WTC11 (cell line): ENCODE measurements at regions of chr17 and their contacts with region 1.

Region 1: GRCh38 chr17:42019509-42020404 is at the start of gene NKIRAS2:
- DNase-seq: peak; percentile 97
- ATAC-seq: peak; percentile 72
- H3K4me3 Mint-ChIP-seq: peak within 1 kb of the TSS; percentile 95
- H3K27ac Mint-ChIP-seq: peak within 1 kb of the TSS; percentile 89
- H3K4me1 Mint-ChIP-seq: peaks cover 40% of the 10 kb centered on the region
- H3K27me3 Mint-ChIP-seq: no peaks in the 10 kb centered on the region
- CTCF ChIP-seq: peak; percentile 80
- total RNA-seq, gene NKIRAS2: 31.9 to 37.3 TPM (median 36.1 TPM) in 3 replicates

Region 2: GRCh38 chr17:41762841-41763240 is 256.9 kb before region 1 on chr17:
- CTCF ChIA-PET with region 1: no interaction called
- POLR2A ChIA-PET with region 1: no interaction called
- DNase-seq: no peak
- ATAC-seq: no peak
- H3K4me3 Mint-ChIP-seq: no peak overlapping the region
- H3K27ac Mint-ChIP-seq: no peak overlapping the region
- H3K4me1 Mint-ChIP-seq: no peaks in the 10 kb centered on the region
- H3K27me3 Mint-ChIP-seq: no peaks in the 10 kb centered on the region
- CTCF ChIP-seq: no peak

Region 3: GRCh38 chr17:41966463-41967140 is 53.2 kb before region 1 on chr17 and contains the start of gene CNP:
- CTCF ChIA-PET with region 1: interaction called, 11 read pairs
- POLR2A ChIA-PET with region 1: interaction called, 7 read pairs
- DNase-seq: peak; percentile 85
- ATAC-seq: peak; percentile 27
- H3K4me3 Mint-ChIP-seq: peak within 1 kb of the TSS; percentile 84
- H3K27ac Mint-ChIP-seq: peak within 1 kb of the TSS; percentile 94
- H3K4me1 Mint-ChIP-seq: peaks cover 18% of the 10 kb centered on the region
- H3K27me3 Mint-ChIP-seq: peaks cover 9% of the 10 kb centered on the region
- CTCF ChIP-seq: no peak
- total RNA-seq, gene CNP: 52.5 to 54.2 TPM (median 53.9 TPM) in 3 replicates

Region 4: GRCh38 chr17:42050393-42051012 is 30.7 kb after region 1 on chr17 and contains the start of gene C17orf113:
- CTCF ChIA-PET with region 1: interaction called, 10 read pairs
- POLR2A ChIA-PET with region 1: no interaction called
- DNase-seq: peak; percentile 75
- ATAC-seq: peak; percentile 72
- H3K4me3 Mint-ChIP-seq: peak within 1 kb of the TSS; percentile 76
- H3K27ac Mint-ChIP-seq: no peak within 1 kb of the TSS
- H3K4me1 Mint-ChIP-seq: peaks cover 46% of the 10 kb centered on the region
- H3K27me3 Mint-ChIP-seq: peaks cover 9% of the 10 kb centered on the region
- CTCF ChIP-seq: no peak
- total RNA-seq, gene C17orf113: 1.9 to 2.8 TPM (median 2.5 TPM) in 3 replicates

Region 5: GRCh38 chr17:42072323-42073187 is 52.8 kb after region 1 on chr17:
- CTCF ChIA-PET with region 1: interaction called, 18 read pairs
- POLR2A ChIA-PET with region 1: no interaction called
- DNase-seq: peak; percentile 52
- ATAC-seq: peak; percentile 30
- H3K4me3 Mint-ChIP-seq: peak overlapping the region; percentile 77
- H3K27ac Mint-ChIP-seq: no peak overlapping the region
- H3K4me1 Mint-ChIP-seq: peaks cover 10% of the 10 kb centered on the region
- H3K27me3 Mint-ChIP-seq: peaks cover 11% of the 10 kb centered on the region
- CTCF ChIP-seq: no peak

Region 6: DNA sequence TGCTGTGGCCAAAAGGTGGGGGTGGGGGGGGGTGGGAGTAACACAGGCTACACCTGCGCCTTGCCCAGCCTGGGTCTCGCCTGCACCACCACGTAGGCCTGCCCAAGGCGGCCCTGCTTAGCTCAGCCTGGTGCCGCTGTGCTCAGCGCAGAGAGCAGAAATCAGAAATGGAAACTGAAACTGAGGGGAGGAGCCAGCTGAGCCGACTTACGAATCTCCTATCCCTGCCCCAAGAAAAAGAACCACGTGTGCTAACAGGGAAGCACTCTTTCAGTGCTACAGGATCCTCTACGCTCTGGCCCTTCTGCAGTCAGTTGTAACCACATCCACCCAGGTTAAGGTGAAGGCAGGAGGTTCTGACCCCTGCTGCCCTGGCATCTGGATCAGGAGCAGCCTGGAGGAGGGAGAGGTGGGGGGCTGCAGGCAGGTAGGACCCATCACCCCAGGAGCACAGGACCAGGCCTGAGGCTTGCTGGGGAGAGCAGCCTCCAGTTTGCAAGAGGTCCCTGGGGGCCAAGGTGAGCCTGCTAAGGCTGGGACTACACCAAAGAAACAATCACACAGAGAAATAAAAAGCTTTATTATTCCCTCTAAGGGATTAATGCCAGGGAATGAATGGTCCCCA is 92.9 kb after region 1 on chr17 and contains the start of gene DHX58:
- CTCF ChIA-PET with region 1: interaction called, 13 read pairs
- POLR2A ChIA-PET with region 1: interaction called, 8 read pairs
- DNase-seq: no peak
- ATAC-seq: peak; percentile 2; the same call in 1 of the 2 replicates
- H3K4me3 Mint-ChIP-seq: no peak within 1 kb of the TSS
- H3K27ac Mint-ChIP-seq: peak within 1 kb of the TSS; percentile 22
- H3K4me1 Mint-ChIP-seq: peaks cover 17% of the 10 kb centered on the region
- H3K27me3 Mint-ChIP-seq: no peaks in the 10 kb centered on the region
- CTCF ChIP-seq: no peak
- total RNA-seq, gene DHX58: 6.3 to 7.6 TPM (median 7.3 TPM) in 3 replicates

Region 7: DNA sequence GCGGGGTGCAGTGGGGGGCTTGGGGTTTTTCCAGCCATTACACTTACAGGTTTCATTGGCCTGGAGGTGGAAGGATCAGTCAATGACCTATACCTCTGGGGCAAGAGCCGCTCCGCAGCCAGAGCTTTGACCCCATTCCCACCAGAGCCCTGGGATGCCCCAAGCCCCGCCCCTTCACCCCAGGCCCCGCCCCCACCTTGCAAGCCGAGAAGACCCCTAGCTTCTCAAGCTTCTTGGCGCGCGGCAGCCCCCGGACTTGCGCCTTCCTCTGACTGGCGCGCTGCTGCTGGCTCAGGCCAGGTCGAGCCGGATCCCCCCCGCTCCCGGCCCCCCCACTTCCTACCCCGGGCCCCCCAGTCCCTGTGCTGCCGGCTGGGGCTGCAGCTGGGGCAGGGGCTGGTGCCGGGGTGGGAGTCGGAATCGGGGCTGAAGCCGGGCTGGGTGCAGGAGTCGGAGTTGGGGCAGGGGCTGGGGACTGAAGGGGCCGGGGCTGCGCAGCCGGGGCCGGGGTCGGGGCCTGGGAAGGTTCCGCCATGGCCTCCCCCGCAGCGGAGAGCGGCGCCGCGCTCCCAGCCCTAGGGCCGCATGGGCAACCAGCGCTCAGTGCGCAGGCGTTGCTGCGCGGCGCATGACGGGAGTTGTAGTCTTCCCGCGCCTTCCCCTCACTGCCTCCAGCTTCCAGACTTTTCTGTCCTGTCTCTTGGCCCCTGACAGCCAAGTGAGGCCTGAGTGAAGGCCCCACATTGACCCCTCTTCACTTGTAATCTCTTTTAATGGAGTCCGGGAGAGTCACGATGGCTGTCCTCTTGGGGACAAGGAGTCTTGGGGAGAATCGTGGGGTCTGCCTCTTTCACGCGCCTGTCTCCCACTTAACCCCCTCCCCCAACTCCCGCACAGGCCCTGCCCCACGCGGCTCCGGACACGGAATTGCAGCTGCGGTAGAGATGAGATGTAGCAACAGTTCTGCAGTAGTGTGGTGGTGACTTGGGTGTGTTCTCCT is 101.3 kb after region 1 on chr17 and contains the start of gene KAT2A:
- CTCF ChIA-PET with region 1: interaction called, 16 read pairs
- POLR2A ChIA-PET with region 1: interaction called, 4 read pairs
- DNase-seq: peak; percentile 85
- ATAC-seq: peak; percentile 73
- H3K4me3 Mint-ChIP-seq: peak within 1 kb of the TSS; percentile 69
- H3K27ac Mint-ChIP-seq: 0 out of 2 replicates have a peak within 1 kb of the TSS, but pooled peaks have one; percentile 19
- H3K4me1 Mint-ChIP-seq: peaks cover 31% of the 10 kb centered on the region
- H3K27me3 Mint-ChIP-seq: no peaks in the 10 kb centered on the region
- CTCF ChIP-seq: no peak
- total RNA-seq, gene KAT2A: 44.8 to 54.0 TPM (median 52.7 TPM) in 3 replicates

Region 8: DNA sequence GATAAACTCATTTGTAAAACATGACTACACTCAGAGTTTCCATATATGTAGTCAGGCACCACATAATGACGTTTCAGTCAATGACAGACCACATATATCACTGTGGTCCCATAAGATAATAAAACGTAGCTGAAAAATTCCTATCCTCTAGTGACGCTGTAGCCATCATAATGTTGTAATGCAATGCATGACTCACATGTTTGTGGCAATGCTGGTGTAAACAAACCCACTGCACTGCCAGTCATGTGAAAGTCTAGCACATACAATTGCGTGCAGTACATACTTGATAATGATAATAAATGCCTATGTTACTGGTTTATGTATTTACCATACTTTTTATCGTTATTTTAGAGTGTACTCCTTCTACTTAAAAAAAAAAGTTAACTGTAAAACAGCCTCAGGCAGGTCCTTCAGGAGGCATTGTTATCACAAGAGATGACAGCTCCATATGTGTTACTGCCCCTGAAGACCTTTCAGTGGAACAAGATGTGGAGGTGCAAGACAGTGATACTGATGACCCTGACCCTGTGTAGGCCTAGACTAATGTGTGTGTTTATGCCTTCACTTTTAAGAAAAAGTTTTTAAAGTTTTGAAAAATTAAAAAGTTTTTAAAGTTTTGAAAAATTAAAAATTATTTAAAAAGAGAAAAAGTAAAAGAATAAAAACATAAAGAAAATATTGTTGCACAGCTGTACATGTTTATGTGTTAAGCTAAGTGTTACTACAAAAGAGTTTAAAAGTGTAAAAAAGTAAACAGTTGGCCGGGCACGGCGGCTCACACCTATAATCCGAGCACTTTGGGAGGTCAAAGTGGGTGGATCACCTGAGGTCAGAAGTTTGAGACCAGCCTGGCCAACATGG is 247.4 kb after region 1 on chr17:
- CTCF ChIA-PET with region 1: no interaction called
- POLR2A ChIA-PET with region 1: no interaction called
- DNase-seq: no peak
- ATAC-seq: no peak
- H3K4me3 Mint-ChIP-seq: no peak overlapping the region
- H3K27ac Mint-ChIP-seq: no peak overlapping the region
- H3K4me1 Mint-ChIP-seq: peaks cover 16% of the 10 kb centered on the region
- H3K27me3 Mint-ChIP-seq: no peaks in the 10 kb centered on the region
- CTCF ChIP-seq: no peak